ENCODE measurements at regions of chr3 and their contacts with region 1.

Region 1: DNA sequence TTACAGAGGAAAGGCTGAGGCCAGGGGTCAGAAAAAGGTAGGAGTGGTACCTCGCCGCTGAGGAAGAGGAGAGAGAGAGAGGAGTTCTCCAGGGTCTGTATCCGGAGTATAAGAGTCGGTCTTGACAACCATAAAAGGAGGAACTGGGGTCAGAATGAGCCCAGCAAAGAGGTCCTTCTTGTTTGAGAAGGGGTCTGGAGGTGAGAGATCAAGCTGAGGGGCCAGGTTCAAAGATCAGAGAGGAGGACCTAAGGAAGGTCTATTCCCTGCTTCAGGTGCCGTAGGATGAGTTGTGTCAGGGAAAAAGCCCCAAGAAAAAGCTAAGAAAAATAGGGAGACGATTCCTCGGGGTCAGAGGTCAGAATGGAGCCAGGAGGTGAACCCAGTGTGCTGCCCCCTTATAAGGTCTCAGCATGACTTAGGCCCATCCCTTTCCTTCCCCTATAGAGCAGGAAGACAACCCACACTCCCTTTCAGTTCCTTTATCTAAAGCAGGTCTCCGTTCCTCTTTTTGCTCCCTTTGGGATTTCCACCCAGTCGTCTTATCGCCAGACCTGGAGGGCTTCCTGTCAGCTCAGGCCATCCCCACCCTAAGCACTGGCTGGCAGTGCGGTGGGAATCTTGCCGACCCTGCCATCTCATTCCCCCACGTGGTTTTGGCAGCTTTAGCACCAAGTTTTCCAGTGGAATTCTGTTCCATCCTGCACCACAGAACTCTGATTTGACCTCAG is 651 bp downstream of the MTMR14 start:
- DNase-seq: no peak
- H3K4me3 Mint-ChIP-seq: peak overlapping the region; percentile 93
- H3K27ac Mint-ChIP-seq: peak overlapping the region; percentile 84
- H3K4me1 Mint-ChIP-seq: peaks cover 11% of the 10 kb centered on the region
- H3K27me3 Mint-ChIP-seq: no peaks in the 10 kb centered on the region

Region 2: GRCh38 chr3:9503283-9503682 is 146.7 kb before region 1 on chr3:
- intact Hi-C with region 1: loop called (anchors 5 kb)
- DNase-seq: peak; percentile 60
- H3K4me3 Mint-ChIP-seq: no peak overlapping the region
- H3K27ac Mint-ChIP-seq: no peak overlapping the region
- H3K4me1 Mint-ChIP-seq: peaks cover 2% of the 10 kb centered on the region
- H3K27me3 Mint-ChIP-seq: peaks cover 22% of the 10 kb centered on the region

Region 3: DNA sequence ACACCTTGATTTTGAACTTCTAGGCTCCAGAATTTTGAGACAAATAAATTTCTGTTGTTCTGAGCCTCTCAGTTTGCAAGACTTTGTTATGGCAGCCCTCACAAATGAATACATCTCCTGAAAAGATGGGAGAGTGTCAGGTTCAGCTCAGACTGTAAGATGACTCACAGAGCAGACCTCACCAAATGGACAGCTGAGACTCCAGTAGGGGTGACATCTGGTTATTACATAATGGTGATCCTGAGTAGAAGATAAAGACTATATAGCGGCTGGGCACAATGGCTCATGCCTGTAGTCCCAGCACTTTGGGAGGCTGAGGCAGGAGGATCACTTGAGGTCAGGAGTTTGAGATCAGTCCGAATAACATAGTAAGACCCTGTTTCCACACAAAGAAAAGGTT is 26.8 kb before region 1 on chr3:
- intact Hi-C with region 1: no loop called
- DNase-seq: no peak
- H3K4me3 Mint-ChIP-seq: no peak overlapping the region
- H3K27ac Mint-ChIP-seq: no peak overlapping the region
- H3K4me1 Mint-ChIP-seq: no peaks in the 10 kb centered on the region
- H3K27me3 Mint-ChIP-seq: peaks cover 7% of the 10 kb centered on the region

Region 4: GRCh38 chr3:9800525-9800924 is 150.6 kb after region 1 on chr3:
- intact Hi-C with region 1: no loop called
- DNase-seq: no peak
- H3K4me3 Mint-ChIP-seq: no peak overlapping the region
- H3K27ac Mint-ChIP-seq: no peak overlapping the region
- H3K4me1 Mint-ChIP-seq: peaks cover 20% of the 10 kb centered on the region
- H3K27me3 Mint-ChIP-seq: no peaks in the 10 kb centered on the region

Measured in activated T-helper 2 cell treated with anti-CD3 and anti-CD28 coated beads, Interferon-gamma antibody, Interleukin-2, Interleukin-4, amounts not matched to agents 10 μg/mL and 5 μg/mL and 100 μg/mL, durations not matched to agents 14 hours and 24 hours and 36 hours (primary cell).